ENCODE measurements at regions of chr4 and their contacts with region 1.

Region 1: GRCh38 chr4:83034630-83035494 is at the start of gene COPS4:
- DNase-seq: peak; percentile 77 to 98 (median 97)
- ATAC-seq: peak; percentile 99
- H3K4me3 ChIP-seq: peak within 1 kb of the TSS; percentile 98
- H3K4me3 Mint-ChIP-seq: peak within 1 kb of the TSS; percentile 92 to 100 (median 98)
- H3K27ac ChIP-seq: peak within 1 kb of the TSS; percentile 94
- H3K27ac Mint-ChIP-seq: peak within 1 kb of the TSS; percentile 94 to 100 (median 97)
- H3K4me1 ChIP-seq: peaks cover 4 to 19% of the 10 kb centered on the region in 2 donors
- H3K4me1 Mint-ChIP-seq: peaks cover 19 to 44% (median 35%) of the 10 kb centered on the region in 7 donors
- H3K27me3 ChIP-seq: no peaks in the 10 kb centered on the region
- H3K27me3 Mint-ChIP-seq: no peaks in the 10 kb centered on the region
- total RNA-seq, gene COPS4: 23.5 to 32.8 (median 24.7) TPM

Region 2: DNA sequence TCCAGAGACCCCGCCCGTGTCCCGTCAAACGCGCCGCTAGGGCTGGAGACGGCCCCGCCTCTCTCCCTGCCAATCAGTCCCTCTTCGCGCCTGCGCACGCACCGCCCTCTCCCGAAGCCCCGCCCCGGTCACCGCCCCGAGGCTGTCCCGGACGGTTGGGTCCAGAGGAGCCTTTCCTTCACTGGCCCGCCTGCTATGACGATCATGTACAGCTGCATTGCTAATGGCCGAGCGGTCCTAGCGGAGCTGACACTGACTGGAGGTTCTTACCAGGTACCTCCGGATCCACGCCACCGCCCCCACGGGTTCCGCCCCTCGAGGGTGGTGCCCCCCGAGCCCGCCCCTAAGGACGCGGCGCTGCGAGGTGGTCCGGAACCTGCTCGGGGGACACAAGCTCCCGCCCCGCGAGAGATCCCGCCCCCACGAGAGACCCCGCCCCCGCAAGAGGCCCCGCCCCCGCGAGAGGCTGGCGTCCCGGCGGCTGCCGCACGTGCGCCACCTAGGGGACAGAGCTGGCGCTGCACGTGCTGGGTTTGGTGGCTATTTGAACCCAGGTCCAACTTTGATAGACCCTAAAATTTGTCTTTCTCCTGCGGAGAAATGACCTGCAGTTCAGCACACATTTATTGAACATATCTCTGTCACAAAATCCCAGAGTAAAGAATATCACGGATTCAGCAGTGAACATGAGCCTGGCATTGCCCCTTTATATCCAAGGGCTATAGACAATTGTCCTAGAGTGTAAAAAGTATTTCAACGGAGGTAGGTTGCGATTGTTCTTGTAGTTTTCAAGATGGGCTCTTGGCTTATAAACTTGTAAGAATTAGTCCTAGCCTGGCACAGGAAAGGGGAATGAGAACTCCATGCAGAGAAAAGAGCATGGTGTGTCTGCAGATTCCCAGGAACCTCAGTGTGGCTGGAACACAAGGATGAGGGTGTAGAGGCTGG is 749.7 kb before region 1 on chr4:
- CTCF ChIA-PET with region 1: no interaction called
- POLR2A ChIA-PET with region 1: no interaction called
- intact Hi-C with region 1: loop called in 1 of 2 experiments (anchors 10 kb)
- DNase-seq: peak; percentile 97 to 100 (median 99)
- ATAC-seq: peak; percentile 94
- H3K4me3 ChIP-seq: peak overlapping the region; percentile 55
- H3K4me3 Mint-ChIP-seq: peak overlapping the region; percentile 70 to 91 (median 86)
- H3K27ac ChIP-seq: peak overlapping the region; percentile 71
- H3K27ac Mint-ChIP-seq: peak overlapping the region; percentile 53 to 94 (median 83)
- H3K4me1 ChIP-seq: peaks cover 4 to 11% of the 10 kb centered on the region in 2 donors
- H3K4me1 Mint-ChIP-seq: peaks cover 9 to 22% (median 13%) of the 10 kb centered on the region in 7 donors
- H3K27me3 ChIP-seq: no peaks in the 10 kb centered on the region
- H3K27me3 Mint-ChIP-seq: peaks cover 0 to 28% (median 0%) of the 10 kb centered on the region in 5 donors

Region 3: GRCh38 chr4:82865592-82865991 is 169.3 kb before region 1 on chr4:
- CTCF ChIA-PET with region 1: no interaction called
- POLR2A ChIA-PET with region 1: no interaction called
- intact Hi-C with region 1: loop called in 1 of 2 experiments (anchors 1 kb)
- DNase-seq: peak in 7 of 9 donors; percentile 20 to 53 (median 30)
- ATAC-seq: peak; percentile 70
- H3K4me3 ChIP-seq: no peak overlapping the region
- H3K4me3 Mint-ChIP-seq: peak overlapping the region in 9 of 10 donors; percentile 33 to 79 (median 63)
- H3K27ac ChIP-seq: peak overlapping the region; percentile 56
- H3K27ac Mint-ChIP-seq: peak overlapping the region; percentile 44 to 94 (median 86)
- H3K4me1 ChIP-seq: peaks cover 13 to 19% of the 10 kb centered on the region in 2 donors
- H3K4me1 Mint-ChIP-seq: peaks cover 19 to 43% (median 33%) of the 10 kb centered on the region in 7 donors
- H3K27me3 ChIP-seq: no peaks in the 10 kb centered on the region
- H3K27me3 Mint-ChIP-seq: no peaks in the 10 kb centered on the region

Region 4: GRCh38 chr4:82890901-82891706 is 143.8 kb before region 1 on chr4 and contains the start of gene SEC31A:
- CTCF ChIA-PET with region 1: no interaction called
- POLR2A ChIA-PET with region 1: interaction called, 6 read pairs
- intact Hi-C with region 1: loop called (anchors 1 kb)
- DNase-seq: peak; percentile 89 to 98 (median 95)
- ATAC-seq: peak; percentile 97
- H3K4me3 ChIP-seq: peak within 1 kb of the TSS; percentile 96
- H3K4me3 Mint-ChIP-seq: peak within 1 kb of the TSS; percentile 86 to 96 (median 93)
- H3K27ac ChIP-seq: peak within 1 kb of the TSS; percentile 99
- H3K27ac Mint-ChIP-seq: peak within 1 kb of the TSS; percentile 92 to 99 (median 97)
- H3K4me1 ChIP-seq: peaks cover 11 to 12% of the 10 kb centered on the region in 2 donors
- H3K4me1 Mint-ChIP-seq: peaks cover 18 to 51% (median 41%) of the 10 kb centered on the region in 7 donors
- H3K27me3 ChIP-seq: no peaks in the 10 kb centered on the region
- H3K27me3 Mint-ChIP-seq: no peaks in the 10 kb centered on the region
- total RNA-seq, gene SEC31A: 137 to 168 (median 149) TPM

Region 5: DNA sequence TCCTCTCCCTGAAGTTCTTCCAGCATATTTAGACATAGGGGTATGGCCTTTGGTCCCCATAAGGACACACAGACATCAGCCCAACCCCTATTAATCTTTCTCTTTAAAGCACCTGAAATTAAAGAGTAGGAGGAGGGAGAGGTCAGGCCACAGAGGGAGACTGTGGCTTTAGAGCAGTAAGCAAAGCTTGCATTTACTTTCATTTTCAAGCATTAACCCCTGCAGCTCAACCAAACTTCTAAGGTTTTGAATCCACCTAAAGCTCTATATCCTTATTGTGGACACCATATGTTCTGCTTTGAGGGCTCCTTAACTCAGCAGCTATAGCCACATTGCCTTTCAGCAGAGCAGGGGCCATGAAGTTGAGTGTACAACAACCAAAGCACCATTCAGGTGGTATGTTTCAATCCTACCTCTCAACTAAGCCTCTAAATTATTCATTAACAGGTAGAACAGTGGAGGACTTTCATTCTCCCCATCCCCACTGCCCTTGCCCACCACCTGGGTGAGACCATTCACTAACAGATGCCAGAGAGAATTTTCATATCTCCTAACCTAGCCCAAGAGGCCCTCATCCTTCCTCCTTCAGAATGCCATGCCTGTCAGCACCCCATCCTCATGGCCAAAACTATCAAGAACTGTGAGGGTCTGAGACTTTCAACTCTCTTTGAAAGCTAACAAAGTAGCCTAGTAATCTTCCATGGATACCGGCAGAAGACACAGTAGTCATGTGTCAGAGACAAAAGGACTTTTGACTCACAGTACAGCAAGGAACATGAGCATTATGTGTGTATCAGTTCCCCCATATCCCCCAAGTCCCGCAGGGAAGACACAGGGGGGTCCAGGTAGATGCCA is 45.1 kb before region 1 on chr4:
- CTCF ChIA-PET with region 1: no interaction called
- POLR2A ChIA-PET with region 1: interaction called, 3 read pairs
- intact Hi-C with region 1: loop called in 1 of 2 experiments (anchors 1 kb)
- DNase-seq: peak in 5 of 9 donors; percentile 4 to 26 (median 11)
- ATAC-seq: peak; percentile 75
- H3K4me3 ChIP-seq: peak overlapping the region; percentile 9
- H3K4me3 Mint-ChIP-seq: peak overlapping the region; percentile 33 to 72 (median 60)
- H3K27ac ChIP-seq: peak overlapping the region; percentile 38
- H3K27ac Mint-ChIP-seq: peak overlapping the region; percentile 8 to 92 (median 59)
- H3K4me1 ChIP-seq: peaks cover 5 to 9% of the 10 kb centered on the region in 2 donors
- H3K4me1 Mint-ChIP-seq: peaks cover 14 to 37% (median 25%) of the 10 kb centered on the region in 7 donors
- H3K27me3 ChIP-seq: no peaks in the 10 kb centered on the region
- H3K27me3 Mint-ChIP-seq: no peaks in the 10 kb centered on the region

Measured in naive thymus-derived CD4-positive, alpha-beta T cell (primary cell).